ENCODE measurements at regions of chr6 and their contacts with region 1.

Region 1: DNA sequence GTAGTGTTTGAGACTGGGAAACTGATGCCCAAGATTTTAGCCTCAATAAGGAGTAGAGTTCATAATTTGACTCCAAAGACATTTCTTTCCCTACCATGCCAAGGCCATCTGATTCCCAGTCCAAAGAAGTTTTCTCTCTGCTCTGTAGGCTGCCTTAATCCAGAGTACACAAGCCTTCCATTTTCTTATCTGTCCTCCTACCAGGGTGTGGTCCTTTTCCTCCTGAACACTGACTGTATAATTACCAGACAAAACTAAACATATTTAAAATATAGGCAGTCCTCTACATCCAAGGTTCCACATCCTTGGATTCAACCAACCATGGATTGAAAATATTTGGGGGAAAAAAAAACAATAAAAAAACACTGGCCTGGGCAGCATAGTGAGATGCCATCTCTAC is 108.4 kb downstream of the SLC16A10 start:
- DNase-seq: no peak
- H3K4me3 ChIP-seq: no peak overlapping the region
- H3K27ac ChIP-seq: no peak overlapping the region
- H3K4me1 ChIP-seq: no peaks in the 10 kb centered on the region
- H3K27me3 ChIP-seq: no peaks in the 10 kb centered on the region
- CTCF ChIP-seq: no peak
- POLR2A ChIP-seq: no peak

Region 2: GRCh38 chr6:111175109-111175508 is 20.5 kb before region 1 on chr6:
- intact Hi-C with region 1: loop called (anchors 1 kb)
- DNase-seq: no peak
- H3K4me3 ChIP-seq: no peak overlapping the region
- H3K27ac ChIP-seq: no peak overlapping the region
- H3K4me1 ChIP-seq: no peaks in the 10 kb centered on the region
- H3K27me3 ChIP-seq: no peaks in the 10 kb centered on the region
- CTCF ChIP-seq: no peak
- POLR2A ChIP-seq: no peak

Measured in breast epithelium (tissue), 4 donors.